ENCODE measurements at regions of chr1 and their contacts with region 1.

Region 1: DNA sequence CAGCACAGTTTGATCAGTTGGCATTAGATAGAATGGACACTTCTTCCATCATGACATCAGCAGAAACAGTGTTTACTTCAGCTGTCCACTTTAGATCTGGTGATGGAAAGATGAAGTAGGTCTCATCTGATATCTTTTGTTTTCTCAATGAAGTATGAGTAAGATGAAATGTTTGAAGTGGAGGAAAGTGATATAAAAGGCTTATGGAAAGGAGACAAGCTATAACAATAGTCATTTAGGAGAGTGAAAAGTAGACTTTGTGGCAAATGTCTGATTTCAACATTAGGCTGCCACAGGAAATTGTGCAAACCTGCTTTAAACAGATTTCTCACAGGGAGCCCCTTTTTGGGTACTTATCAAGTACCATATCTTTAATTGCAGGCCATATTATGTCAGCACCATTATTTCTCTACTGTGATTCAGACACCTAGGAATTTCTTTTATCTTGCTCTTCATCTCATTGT is 18.2 kb downstream of the PDC start:
- DNase-seq: peak; percentile 94
- H3K4me3 ChIP-seq: no peak overlapping the region
- H3K27ac ChIP-seq: peak overlapping the region; percentile 71
- H3K4me1 ChIP-seq: peaks cover 33% of the 10 kb centered on the region
- H3K27me3 ChIP-seq: no peaks in the 10 kb centered on the region
- CTCF ChIP-seq: no peak
- POLR2A ChIP-seq: peak; percentile 76

Region 2: DNA sequence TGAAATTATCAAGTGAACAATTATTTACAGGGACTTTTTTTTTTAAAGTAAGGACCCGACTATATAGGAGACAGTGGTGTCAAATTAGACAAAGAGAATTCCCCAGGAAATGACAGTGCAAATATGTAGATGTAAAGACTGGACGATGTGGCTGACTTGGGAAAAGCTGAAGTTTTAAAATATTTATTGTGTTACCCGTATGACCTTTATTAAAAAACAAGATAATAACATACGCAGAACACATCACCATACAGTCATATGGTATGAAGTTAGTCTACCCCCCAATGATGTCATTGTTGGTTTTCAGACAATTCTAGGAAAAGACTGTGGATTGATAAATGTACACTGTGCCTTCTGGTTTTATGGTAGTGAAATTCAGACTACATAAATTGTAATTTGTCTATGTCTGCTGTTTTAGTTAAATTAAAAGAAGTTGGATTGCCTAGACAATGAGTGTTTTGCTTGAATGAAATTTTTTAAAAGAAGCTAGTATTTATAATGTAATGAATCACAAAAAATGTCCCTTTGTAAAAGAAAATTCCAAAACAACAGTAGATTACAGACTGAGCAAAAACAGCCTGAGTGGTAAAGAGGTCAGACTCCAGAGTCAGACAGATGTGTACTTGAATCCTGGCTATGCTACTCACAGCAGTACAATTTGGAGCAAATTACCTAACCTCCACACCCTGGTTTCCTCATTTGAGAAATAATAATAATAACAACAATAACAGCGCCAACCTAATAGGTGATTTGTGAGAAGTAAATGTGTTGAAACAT is 33.8 kb after region 1 on chr1:
- CTCF ChIA-PET with region 1: no interaction called
- POLR2A ChIA-PET with region 1: no interaction called
- dilution Hi-C with region 1: no loop called
- intact Hi-C with region 1: loop called (anchors 1 kb)
- DNase-seq: peak; percentile 95
- H3K4me3 ChIP-seq: peak overlapping the region in 1 of 3 experiments; percentile 15
- H3K27ac ChIP-seq: peak overlapping the region; percentile 95
- H3K4me1 ChIP-seq: peaks cover 24% of the 10 kb centered on the region
- H3K27me3 ChIP-seq: no peaks in the 10 kb centered on the region
- CTCF ChIP-seq: no peak
- POLR2A ChIP-seq: no peak

Region 3: GRCh38 chr1:186574951-186575747 is 132.5 kb after region 1 on chr1:
- CTCF ChIA-PET with region 1: no interaction called
- POLR2A ChIA-PET with region 1: no interaction called
- dilution Hi-C with region 1: no loop called
- intact Hi-C with region 1: loop called (anchors 1 kb)
- DNase-seq: peak; percentile 79
- H3K4me3 ChIP-seq: no peak overlapping the region
- H3K27ac ChIP-seq: peak overlapping the region; percentile 45
- H3K4me1 ChIP-seq: peaks cover 21% of the 10 kb centered on the region
- H3K27me3 ChIP-seq: no peaks in the 10 kb centered on the region
- CTCF ChIP-seq: no peak
- POLR2A ChIP-seq: no peak

Region 4: GRCh38 chr1:186943891-186944686 is 501.4 kb after region 1 on chr1:
- CTCF ChIA-PET with region 1: no interaction called
- POLR2A ChIA-PET with region 1: no interaction called
- dilution Hi-C with region 1: no loop called
- intact Hi-C with region 1: loop called (anchors 1 kb)
- DNase-seq: peak; percentile 94
- H3K4me3 ChIP-seq: no peak overlapping the region
- H3K27ac ChIP-seq: peak overlapping the region; percentile 99
- H3K4me1 ChIP-seq: peaks cover 59% of the 10 kb centered on the region
- H3K27me3 ChIP-seq: no peaks in the 10 kb centered on the region
- CTCF ChIP-seq: no peak
- POLR2A ChIP-seq: peak; percentile 67

Region 5: DNA sequence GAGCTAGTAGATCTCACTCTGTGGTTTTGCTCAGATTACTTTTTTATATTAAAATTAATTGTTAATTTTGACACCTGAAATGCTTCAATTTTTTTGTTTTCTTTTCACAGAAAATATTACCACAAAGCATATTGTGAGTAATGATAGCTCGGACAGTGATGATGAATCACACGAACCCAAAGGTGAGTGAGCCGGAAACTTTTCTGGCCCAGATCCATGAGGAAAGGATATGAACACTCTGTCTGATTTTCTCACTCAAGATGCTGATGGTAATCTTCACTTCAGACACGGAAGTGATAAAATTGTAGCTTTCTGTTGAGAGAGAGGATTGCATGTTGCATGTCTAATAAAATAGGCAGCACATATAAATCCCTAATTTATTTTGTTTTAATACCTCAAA is 507.9 kb after region 1 on chr1:
- CTCF ChIA-PET with region 1: no interaction called
- POLR2A ChIA-PET with region 1: no interaction called
- dilution Hi-C with region 1: no loop called
- intact Hi-C with region 1: loop called (anchors 1 kb)
- DNase-seq: peak; percentile 89
- H3K4me3 ChIP-seq: no peak overlapping the region
- H3K27ac ChIP-seq: peak overlapping the region; percentile 97
- H3K4me1 ChIP-seq: peaks cover 58% of the 10 kb centered on the region
- H3K27me3 ChIP-seq: no peaks in the 10 kb centered on the region
- CTCF ChIP-seq: no peak
- POLR2A ChIP-seq: no peak